ENCODE measurements at regions of chr6 and their contacts with region 1.

Region 1: DNA sequence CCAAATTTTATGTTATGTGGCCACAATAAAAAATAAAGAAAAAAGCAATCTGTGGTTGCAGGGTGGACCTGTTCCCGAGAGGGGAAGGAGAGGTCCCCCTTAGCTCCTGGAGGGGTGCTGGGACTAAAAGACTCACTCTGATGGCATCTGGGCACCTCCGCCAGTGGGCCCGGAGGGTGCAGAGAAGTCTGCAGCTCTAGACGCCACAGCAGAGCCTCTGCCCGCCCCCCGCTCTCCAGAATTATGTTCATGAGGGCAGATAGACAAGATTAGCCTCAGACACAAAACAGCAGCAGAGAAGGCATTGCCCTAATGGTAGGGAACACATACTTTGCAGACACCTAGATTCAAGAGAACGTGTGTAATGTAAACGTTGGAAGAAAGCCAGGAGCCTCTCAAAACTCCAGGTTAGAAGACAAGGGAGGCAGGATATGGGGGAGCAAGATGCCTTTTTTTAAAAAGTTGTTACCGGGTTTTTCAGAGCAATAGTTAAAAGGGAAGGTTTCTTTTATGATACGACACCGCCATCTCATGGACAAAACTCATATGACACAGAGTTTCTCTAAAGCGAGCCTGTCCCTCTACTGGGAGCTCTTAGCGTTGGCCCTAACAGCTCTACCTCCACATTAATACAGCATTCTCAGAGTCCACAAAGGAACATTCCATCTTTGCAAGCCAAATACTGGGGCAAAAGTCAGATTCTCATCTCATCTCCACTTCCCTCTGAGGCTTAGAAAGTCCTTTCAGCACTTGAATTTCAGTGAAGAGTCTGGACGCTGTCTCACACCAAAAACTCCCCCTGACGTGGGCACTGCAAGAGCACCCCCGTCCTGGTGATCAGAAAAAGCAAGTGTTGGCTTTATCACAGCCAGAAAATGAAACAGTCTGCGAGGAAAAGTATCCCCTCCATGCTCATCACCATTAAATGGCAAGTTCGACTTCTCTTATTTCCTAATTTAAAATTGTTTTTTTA is 47.2 kb downstream of the FOXF2 start:
- DNase-seq: peak in 1 of 2 experiments; percentile 85
- H3K4me3 ChIP-seq: no peak overlapping the region
- H3K27ac ChIP-seq: no peak overlapping the region
- H3K4me1 ChIP-seq: peaks cover 0 to 3% (median 1%) of the 10 kb centered on the region in 4 experiments; a peak in 3 of 7 replicates
- H3K27me3 ChIP-seq: no peaks in the 10 kb centered on the region; a peak in 3 of 7 replicates
- CTCF ChIP-seq: peak in 2 of 3 experiments; percentile 79 to 98; a peak in 3 of 4 replicates
- EP300 ChIP-seq: no peak
- POLR2A ChIP-seq: no peak
- RAD21 ChIP-seq: peak; percentile 87 to 89

Region 2: GRCh38 chr6:1381481-1382330 is 54.9 kb before region 1 on chr6:
- CTCF ChIA-PET with region 1: interaction called, 13 read pairs
- POLR2A ChIA-PET with region 1: no interaction called
- DNase-seq: peak in 1 of 2 experiments; percentile 95
- H3K4me3 ChIP-seq: peak overlapping the region; percentile 1 to 63 (median 22); a peak in 4 of 8 replicates
- H3K27ac ChIP-seq: no peak overlapping the region
- H3K4me1 ChIP-seq: peaks cover 0 to 37% (median 17%) of the 10 kb centered on the region in 4 experiments; a peak in 5 of 7 replicates
- H3K27me3 ChIP-seq: peaks cover 94 to 100% (median 98%) of the 10 kb centered on the region in 4 experiments
- CTCF ChIP-seq: peak in 2 of 3 experiments; percentile 73 to 78; a peak in 3 of 4 replicates
- EP300 ChIP-seq: no peak
- POLR2A ChIP-seq: no peak
- RAD21 ChIP-seq: peak; percentile 75 to 88

Region 3: DNA sequence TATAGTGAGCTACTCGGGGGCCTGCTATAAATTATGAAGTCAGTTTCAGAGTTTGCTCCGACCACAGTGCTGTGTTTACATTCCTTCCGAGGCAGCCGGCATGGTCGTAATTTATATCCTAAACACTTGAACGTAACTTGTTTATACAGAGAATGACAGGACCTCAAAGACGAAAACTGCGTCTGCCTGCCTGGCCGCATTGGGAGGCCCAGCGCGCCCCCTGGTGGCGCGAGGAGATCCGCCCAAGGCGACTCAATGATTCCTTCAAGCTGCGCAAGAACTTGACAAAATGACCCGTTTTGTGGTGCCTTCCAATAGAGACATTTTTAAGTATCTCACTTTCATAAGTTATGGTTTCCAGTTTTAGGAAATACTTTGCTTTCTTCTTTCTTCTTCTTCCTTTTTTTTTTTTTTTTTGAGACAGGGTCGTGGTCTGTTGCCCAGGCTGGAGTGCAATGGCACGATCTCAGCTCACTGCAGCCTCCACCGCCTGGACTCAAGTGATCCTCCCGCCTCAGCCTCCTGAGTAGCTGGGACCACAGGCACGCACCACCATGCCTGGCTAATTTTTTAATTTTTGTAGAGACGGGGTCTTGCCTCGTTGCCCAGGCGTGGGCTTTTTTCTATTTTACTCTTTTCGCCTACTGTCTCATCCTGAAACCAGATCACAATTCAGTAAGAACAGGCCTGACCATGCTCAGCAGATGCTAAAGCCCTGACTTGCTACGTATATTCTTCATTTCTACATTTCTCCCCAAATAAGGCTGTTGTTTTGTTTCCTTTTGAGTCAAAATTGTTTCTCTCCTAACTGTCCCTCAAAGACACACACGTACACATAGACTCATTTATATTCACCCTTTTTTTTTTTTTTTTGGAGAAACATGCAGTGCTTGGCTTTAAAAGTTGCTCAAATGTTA is 39.4 kb before region 1 on chr6:
- CTCF ChIA-PET with region 1: interaction called, 13 read pairs
- POLR2A ChIA-PET with region 1: interaction called, 6 read pairs
- DNase-seq: peak in 1 of 2 experiments; percentile 82
- H3K4me3 ChIP-seq: no peak overlapping the region
- H3K27ac ChIP-seq: no peak overlapping the region
- H3K4me1 ChIP-seq: peaks cover 0 to 15% (median 5%) of the 10 kb centered on the region in 4 experiments; a peak in 5 of 7 replicates
- H3K27me3 ChIP-seq: peaks cover 59 to 80% (median 70%) of the 10 kb centered on the region in 4 experiments
- CTCF ChIP-seq: peak; percentile 83 to 92 (median 92)
- EP300 ChIP-seq: no peak
- POLR2A ChIP-seq: no peak
- RAD21 ChIP-seq: peak; percentile 75 to 83

Region 4: DNA sequence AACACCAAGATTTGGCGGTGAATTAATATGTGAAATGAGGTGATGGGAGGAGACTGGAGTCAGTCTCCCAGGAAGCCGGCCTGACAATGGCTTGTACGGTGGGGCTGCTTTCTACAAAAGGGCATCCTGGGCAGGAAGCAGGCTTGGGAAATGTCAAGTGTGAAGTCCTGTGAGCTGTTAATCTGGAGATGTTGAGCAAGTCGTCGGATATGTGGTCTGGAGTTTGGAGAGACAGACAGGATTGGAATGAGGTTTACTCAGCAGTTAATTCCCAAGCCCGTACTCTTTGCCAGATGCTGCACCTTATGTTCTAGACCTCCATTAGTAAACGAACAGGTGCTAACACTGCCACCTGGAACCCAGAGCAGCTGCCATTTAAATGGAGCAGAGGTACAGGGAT is 65.4 kb after region 1 on chr6:
- CTCF ChIA-PET with region 1: no interaction called
- POLR2A ChIA-PET with region 1: no interaction called
- DNase-seq: no peak
- H3K4me3 ChIP-seq: no peak overlapping the region
- H3K27ac ChIP-seq: no peak overlapping the region
- H3K4me1 ChIP-seq: peaks cover 3 to 16% (median 11%) of the 10 kb centered on the region in 4 experiments
- H3K27me3 ChIP-seq: no peaks in the 10 kb centered on the region
- CTCF ChIP-seq: no peak
- EP300 ChIP-seq: no peak
- POLR2A ChIP-seq: no peak
- RAD21 ChIP-seq: no peak